ENCODE measurements at regions of chr4 and their contacts with region 1.

Region 1: DNA sequence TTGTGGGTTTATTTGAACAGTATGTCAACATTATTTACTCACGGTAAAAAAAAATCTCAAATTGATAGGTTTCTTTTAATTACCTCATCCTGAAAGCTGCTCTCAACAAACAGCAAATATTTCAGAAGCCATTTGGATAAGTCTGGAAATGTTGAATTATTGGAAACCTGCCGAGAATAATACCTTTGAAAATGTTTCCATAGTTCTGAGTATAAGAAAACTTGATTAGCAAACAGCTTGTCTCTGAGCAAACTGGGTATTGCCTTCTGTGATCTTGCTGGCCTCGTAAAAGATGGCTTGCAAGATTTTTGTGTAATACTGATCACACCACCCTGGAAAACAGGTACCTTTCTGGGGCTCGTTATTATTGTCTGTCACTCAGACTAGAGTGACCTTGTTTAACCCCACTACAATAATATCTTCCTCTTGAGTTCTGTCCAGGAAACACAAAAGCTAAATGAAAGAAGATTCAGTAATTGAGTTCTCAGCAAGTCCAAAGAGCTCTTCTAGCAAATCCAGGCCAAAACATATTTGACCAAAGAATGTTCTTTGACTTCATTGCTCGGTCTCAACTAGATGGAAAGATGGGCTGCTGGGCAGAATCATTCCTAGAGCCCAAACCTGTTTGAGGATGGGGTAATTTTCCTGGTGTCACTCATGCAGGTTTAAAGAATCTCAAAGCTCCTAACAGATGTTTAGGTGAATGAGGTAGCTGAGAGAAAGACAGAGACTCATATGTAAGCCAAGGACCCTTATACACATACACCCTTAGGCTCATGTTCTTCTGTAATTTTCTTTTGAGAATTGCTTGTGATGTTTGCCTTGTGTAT is 255.6 kb upstream of the JADE1 start:
- DNase-seq: no peak
- H3K4me3 ChIP-seq: peak overlapping the region; percentile 61 to 84
- H3K27ac ChIP-seq: peak overlapping the region; percentile 89 to 94
- H3K4me1 ChIP-seq: peaks cover 4 to 9% of the 10 kb centered on the region in 2 donors
- H3K27me3 ChIP-seq: no peaks in the 10 kb centered on the region
- CTCF ChIP-seq: no peak

Region 2: GRCh38 chr4:128468123-128468989 is 85.5 kb before region 1 on chr4:
- intact Hi-C with region 1: loop called (anchors 5 kb)
- DNase-seq: peak; percentile 33 to 85
- H3K4me3 ChIP-seq: peak overlapping the region; percentile 22 to 40
- H3K27ac ChIP-seq: peak overlapping the region; percentile 64 to 72
- H3K4me1 ChIP-seq: peaks cover 4 to 10% of the 10 kb centered on the region in 2 donors
- H3K27me3 ChIP-seq: no peaks in the 10 kb centered on the region
- CTCF ChIP-seq: no peak